ENCODE measurements at regions of chr4 and their contacts with region 1.

Region 1: DNA sequence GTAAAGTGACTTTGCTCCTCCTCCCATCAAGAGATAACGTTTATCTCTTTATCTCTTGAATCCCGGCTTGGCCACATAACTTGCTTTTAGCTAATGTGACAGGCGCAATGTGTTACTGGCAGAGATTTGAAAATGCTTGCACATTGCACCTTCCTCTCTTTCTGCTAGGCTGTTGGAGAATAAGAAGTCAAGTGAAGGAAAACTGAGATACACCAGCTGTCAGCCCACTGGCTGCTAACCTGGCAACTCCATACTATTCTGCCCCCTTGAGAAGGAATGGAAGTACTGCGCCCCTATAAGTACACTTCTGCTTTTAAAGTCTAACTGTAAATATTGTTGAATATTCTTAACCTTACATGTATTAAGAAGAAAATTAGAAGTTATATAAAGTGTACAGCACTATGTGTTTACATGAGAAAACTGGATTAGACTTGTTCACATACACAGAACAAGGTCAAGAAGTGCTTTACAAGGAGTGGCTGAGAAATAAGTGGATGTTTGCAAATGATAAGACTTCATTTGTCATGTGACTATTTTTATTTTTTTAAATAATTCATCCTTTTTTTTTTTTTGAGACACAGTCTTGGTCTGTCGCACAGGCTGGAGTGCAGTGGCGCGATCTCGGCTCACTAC is 424.5 kb upstream of the CTSO start:
- DNase-seq: peak; percentile 44
- CTCF ChIP-seq: peak; percentile 66

Region 2: GRCh38 chr4:156113138-156113765 is 264.9 kb before region 1 on chr4:
- CTCF ChIA-PET with region 1: interaction called, 12 read pairs
- POLR2A ChIA-PET with region 1: no interaction called
- DNase-seq: no peak
- CTCF ChIP-seq: peak; percentile 34

Region 3: GRCh38 chr4:156169011-156169410 is 209.1 kb before region 1 on chr4:
- CTCF ChIA-PET with region 1: interaction called, 15 read pairs
- POLR2A ChIA-PET with region 1: no interaction called
- DNase-seq: peak; percentile 17
- CTCF ChIP-seq: peak; percentile 60

Region 4: GRCh38 chr4:156390599-156391324 is 12.6 kb after region 1 on chr4:
- CTCF ChIA-PET with region 1: no interaction called
- POLR2A ChIA-PET with region 1: no interaction called
- DNase-seq: no peak
- CTCF ChIP-seq: no peak

Region 5: DNA sequence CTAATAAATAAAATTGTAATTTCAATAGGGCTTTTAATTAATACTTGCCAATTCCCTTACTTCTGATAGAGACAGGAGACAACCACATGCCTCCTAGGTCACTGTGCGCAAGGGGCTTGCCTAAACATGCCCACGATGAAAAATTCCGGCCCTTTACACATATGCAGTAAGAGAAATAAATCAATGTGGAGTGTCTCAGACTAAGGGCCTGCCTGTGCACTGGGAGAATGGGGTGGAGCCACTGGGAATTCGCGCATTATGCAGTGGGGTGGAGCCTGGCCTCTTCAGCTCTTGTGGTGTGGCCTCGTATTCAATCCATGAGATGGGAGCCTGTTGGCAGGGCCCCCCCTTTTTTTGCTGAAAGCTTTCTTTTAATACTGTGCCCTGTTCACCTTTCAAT is 109.0 kb after region 1 on chr4:
- CTCF ChIA-PET with region 1: no interaction called
- POLR2A ChIA-PET with region 1: no interaction called
- DNase-seq: no peak
- CTCF ChIP-seq: no peak

Measured in GM10248 (cell line).